PC-9 (cell line): ENCODE measurements at regions of chr20 and their contacts with region 1.

Region 1: DNA sequence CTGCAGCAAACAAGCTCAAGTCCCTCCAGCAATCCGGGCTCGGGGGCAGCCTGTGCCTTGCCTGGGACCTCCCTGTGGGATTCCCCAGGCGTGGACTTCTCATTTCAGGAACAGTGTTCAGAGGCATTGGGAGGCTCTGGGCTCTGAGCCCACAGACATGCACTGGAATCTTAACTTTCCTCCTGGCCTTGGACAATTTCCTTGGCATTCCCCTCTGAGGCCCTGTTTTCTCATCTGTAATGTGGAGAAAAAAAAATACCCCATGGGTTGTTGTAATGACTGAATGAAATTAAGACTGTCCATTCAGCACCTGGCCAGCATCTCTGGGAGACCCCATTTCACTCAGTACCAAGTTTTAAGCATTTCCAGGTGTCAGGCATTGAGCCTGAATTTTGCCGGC is 17.6 kb downstream of the BPIFB4 start:
- DNase-seq: no peak
- H3K4me3 ChIP-seq: no peak overlapping the region
- H3K27ac ChIP-seq: no peak overlapping the region
- H3K4me1 ChIP-seq: no peaks in the 10 kb centered on the region
- H3K27me3 ChIP-seq: no peaks in the 10 kb centered on the region; the same call in 1 of the 2 replicates
- CTCF ChIP-seq: no peak

Region 2: DNA sequence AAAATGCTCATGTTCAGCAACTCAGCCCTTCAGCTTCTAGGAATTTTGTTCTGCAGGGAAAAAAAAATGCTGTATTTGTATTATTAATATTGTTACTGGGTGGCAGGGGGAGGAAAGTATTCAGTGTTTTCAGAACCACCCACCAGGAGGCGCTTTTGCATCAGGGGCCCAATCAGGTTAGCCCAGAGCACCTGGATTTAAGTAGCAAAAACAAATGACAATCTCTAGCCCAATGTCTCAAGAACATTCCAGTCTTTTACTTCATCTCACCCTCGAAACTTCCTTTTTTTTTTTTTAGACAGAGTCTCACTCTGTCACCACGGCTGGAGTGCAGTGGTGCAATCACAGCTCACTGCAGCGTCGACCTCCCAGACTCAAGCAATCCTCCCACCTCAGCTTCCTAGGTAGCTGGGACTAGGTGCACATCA is 422.6 kb before region 1 on chr20:
- CTCF ChIA-PET with region 1: no interaction called
- POLR2A ChIA-PET with region 1: no interaction called
- intact Hi-C with region 1: loop called (anchors 5 kb)
- DNase-seq: peak; percentile 58 to 73
- H3K4me3 ChIP-seq: no peak overlapping the region
- H3K27ac ChIP-seq: no peak overlapping the region
- H3K4me1 ChIP-seq: peaks cover 10% of the 10 kb centered on the region
- H3K27me3 ChIP-seq: no peaks in the 10 kb centered on the region
- CTCF ChIP-seq: peak; percentile 90

Region 3: GRCh38 chr20:32902456-32903420 is 194.3 kb before region 1 on chr20:
- CTCF ChIA-PET with region 1: no interaction called
- POLR2A ChIA-PET with region 1: no interaction called
- intact Hi-C with region 1: loop called (anchors 1 kb)
- DNase-seq: peak in 1 of 2 experiments; percentile 53
- H3K4me3 ChIP-seq: no peak overlapping the region
- H3K27ac ChIP-seq: no peak overlapping the region
- H3K4me1 ChIP-seq: no peaks in the 10 kb centered on the region
- H3K27me3 ChIP-seq: peaks cover 39% of the 10 kb centered on the region; the same call in 1 of the 2 replicates
- CTCF ChIP-seq: peak; percentile 93

Region 4: DNA sequence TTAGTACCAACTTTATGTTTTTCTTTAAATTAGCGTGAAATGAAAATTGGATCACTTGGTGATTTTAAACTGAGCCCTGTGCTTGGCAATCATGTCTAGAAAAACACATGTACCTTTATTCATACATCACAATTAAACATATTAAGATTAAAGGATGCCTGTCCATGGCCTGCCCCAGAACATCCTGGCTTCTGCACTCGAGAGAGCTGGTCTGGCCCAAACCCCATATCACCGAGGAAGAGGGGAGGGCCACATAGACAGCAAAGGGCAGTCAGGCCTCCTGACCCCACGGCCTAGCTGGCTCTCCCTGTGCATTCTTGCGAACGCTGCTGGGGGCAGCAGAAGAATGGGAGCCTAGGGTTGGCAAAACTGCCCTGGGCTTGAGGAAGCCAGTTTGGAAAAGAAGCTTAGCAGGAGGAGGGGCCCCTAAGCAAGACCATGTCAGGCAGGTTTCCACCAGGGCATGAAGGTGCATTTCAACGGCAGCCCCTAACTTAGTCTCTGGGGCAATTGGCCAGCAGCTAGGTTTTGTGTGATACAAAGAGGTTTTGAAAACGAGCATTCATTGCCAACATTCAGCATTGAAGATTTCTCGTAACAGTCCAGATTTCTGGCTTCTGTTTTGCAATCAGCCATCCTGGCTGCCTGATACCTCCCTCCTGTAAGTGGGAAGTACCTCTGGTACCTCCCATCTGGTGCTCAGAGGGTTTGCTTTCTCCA is 34.7 kb before region 1 on chr20:
- CTCF ChIA-PET with region 1: no interaction called
- POLR2A ChIA-PET with region 1: no interaction called
- intact Hi-C with region 1: no loop called
- DNase-seq: no peak
- H3K4me3 ChIP-seq: no peak overlapping the region
- H3K27ac ChIP-seq: no peak overlapping the region
- H3K4me1 ChIP-seq: no peaks in the 10 kb centered on the region
- H3K27me3 ChIP-seq: peaks cover 87% of the 10 kb centered on the region
- CTCF ChIP-seq: no peak

Region 5: GRCh38 chr20:33113387-33113908 is 16.4 kb after region 1 on chr20:
- CTCF ChIA-PET with region 1: no interaction called
- POLR2A ChIA-PET with region 1: no interaction called
- intact Hi-C with region 1: no loop called
- DNase-seq: no peak
- H3K4me3 ChIP-seq: no peak overlapping the region
- H3K27ac ChIP-seq: no peak overlapping the region
- H3K4me1 ChIP-seq: no peaks in the 10 kb centered on the region
- H3K27me3 ChIP-seq: peaks cover 27% of the 10 kb centered on the region
- CTCF ChIP-seq: no peak

Region 6: GRCh38 chr20:33291830-33292355 is 194.9 kb after region 1 on chr20:
- CTCF ChIA-PET with region 1: no interaction called
- POLR2A ChIA-PET with region 1: no interaction called
- intact Hi-C with region 1: loop called (anchors 1 kb)
- DNase-seq: peak in 1 of 2 experiments; percentile 61
- H3K4me3 ChIP-seq: no peak overlapping the region
- H3K27ac ChIP-seq: no peak overlapping the region
- H3K4me1 ChIP-seq: no peaks in the 10 kb centered on the region
- H3K27me3 ChIP-seq: no peaks in the 10 kb centered on the region
- CTCF ChIP-seq: peak; percentile 99

Region 7: GRCh38 chr20:34129518-34130162 is 1032.6 kb after region 1 on chr20:
- CTCF ChIA-PET with region 1: no interaction called
- POLR2A ChIA-PET with region 1: interaction called, 5 read pairs
- intact Hi-C with region 1: loop called (anchors 1 kb)
- DNase-seq: peak; percentile 55 to 60
- H3K4me3 ChIP-seq: no peak overlapping the region
- H3K27ac ChIP-seq: no peak overlapping the region
- H3K4me1 ChIP-seq: peaks cover 4% of the 10 kb centered on the region
- H3K27me3 ChIP-seq: no peaks in the 10 kb centered on the region
- CTCF ChIP-seq: peak; percentile 91